ENCODE measurements at regions of chr2 and their contacts with region 1.

Region 1: DNA sequence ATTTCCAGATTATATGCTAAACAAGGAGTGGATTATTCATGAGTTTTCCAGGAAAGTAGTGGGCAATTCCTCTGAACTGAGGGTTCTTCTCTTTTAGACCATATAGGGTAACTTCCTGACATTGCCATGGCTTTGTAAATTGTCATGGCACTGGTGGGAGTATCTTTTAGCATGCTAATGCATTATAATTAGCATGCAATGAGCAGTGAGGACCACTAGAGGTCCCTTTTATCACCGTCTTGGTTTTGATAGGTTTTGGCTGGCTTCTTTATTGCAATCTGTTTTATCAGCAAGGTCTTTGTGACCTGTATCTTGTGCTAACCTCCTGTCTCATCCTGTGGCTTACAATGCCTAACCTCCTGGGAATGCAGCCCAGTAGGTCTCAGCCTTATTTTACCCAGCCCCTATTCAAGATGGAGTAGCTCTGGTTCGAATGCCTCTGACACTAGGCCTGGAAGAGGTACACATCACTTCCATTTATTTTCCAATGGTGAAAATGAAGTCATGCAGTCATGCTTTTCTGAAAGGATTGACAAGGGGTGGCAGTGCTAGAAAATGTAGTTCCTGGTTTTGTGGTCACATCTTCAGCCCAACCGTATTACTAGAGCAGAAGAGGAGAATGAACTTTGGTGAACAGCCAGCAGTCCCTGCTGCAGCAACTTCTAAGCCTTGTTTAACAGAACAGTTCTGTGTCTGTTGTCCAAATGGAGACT is 26.6 kb upstream of the ITGA4 start:
- DNase-seq: no peak

Region 2: GRCh38 chr2:181104512-181105115 is 325.9 kb before region 1 on chr2:
- in situ Hi-C with region 1: loop called (anchors 25 kb)
- DNase-seq: peak; percentile 73

Measured in ACHN (cell line).